ENCODE measurements at regions of chr19 and their contacts with region 1.

Region 1: GRCh38 chr19:55289117-55289796 is 5.5 kb downstream of the BRSK1 start:
- DNase-seq: no peak
- H3K4me3 ChIP-seq: no peak overlapping the region
- H3K4me3 Mint-ChIP-seq: no peak overlapping the region
- H3K27ac ChIP-seq: no peak overlapping the region
- H3K27ac Mint-ChIP-seq: no peak overlapping the region
- H3K4me1 ChIP-seq: peaks cover 6% of the 10 kb centered on the region
- H3K4me1 Mint-ChIP-seq: peaks cover 4 to 10% (median 10%) of the 10 kb centered on the region in 3 donors
- H3K27me3 ChIP-seq: no peaks in the 10 kb centered on the region
- H3K27me3 Mint-ChIP-seq: peaks cover 0 to 2% of the 10 kb centered on the region in 2 donors

Region 2: GRCh38 chr19:55301459-55302317 is 12.4 kb after region 1 on chr19:
- CTCF ChIA-PET with region 1: interaction called, 36 read pairs
- POLR2A ChIA-PET with region 1: no interaction called
- DNase-seq: peak; percentile 88 to 95 (median 94)
- H3K4me3 ChIP-seq: peak overlapping the region; percentile 60
- H3K4me3 Mint-ChIP-seq: peak overlapping the region; percentile 50 to 92 (median 86)
- H3K27ac ChIP-seq: peak overlapping the region; percentile 35
- H3K27ac Mint-ChIP-seq: peak overlapping the region; percentile 80 to 98 (median 92)
- H3K4me1 ChIP-seq: peaks cover 14% of the 10 kb centered on the region
- H3K4me1 Mint-ChIP-seq: peaks cover 13 to 19% (median 14%) of the 10 kb centered on the region in 3 donors
- H3K27me3 ChIP-seq: no peaks in the 10 kb centered on the region
- H3K27me3 Mint-ChIP-seq: peaks cover 0 to 2% of the 10 kb centered on the region in 2 donors

Measured in CD8-positive, alpha-beta memory T cell (primary cell).